Left cardiac atrium (tissue), 4 donors: ENCODE measurements at regions of chr15 and their contacts with region 1.

Region 1: GRCh38 chr15:37262922-37263608 is 162.7 kb upstream of the MEIS2 start:
- DNase-seq: no peak
- ATAC-seq: no peak

Region 2: GRCh38 chr15:37034835-37035748 is 228.0 kb before region 1 on chr15:
- intact Hi-C with region 1: loop called in 1 of 2 experiments (anchors 10 kb)
- DNase-seq: no peak
- ATAC-seq: peak in 1 of 2 donors; percentile 19